ENCODE measurements at regions of chr3 and their contacts with region 1.

Region 1: GRCh38 chr3:139427283-139427993 is 38.0 kb upstream of the COPB2 start:
- DNase-seq: peak in 2 of 35 experiments; percentile 6 to 58
- ATAC-seq: no peak
- H3K4me3 ChIP-seq: no peak overlapping the region
- H3K4me3 Mint-ChIP-seq: no peak overlapping the region
- H3K27ac ChIP-seq: no peak overlapping the region
- H3K27ac Mint-ChIP-seq: no peak overlapping the region
- H3K4me1 ChIP-seq: no peaks in the 10 kb centered on the region
- H3K4me1 Mint-ChIP-seq: no peaks in the 10 kb centered on the region
- H3K27me3 ChIP-seq: no peaks in the 10 kb centered on the region
- H3K27me3 Mint-ChIP-seq: no peaks in the 10 kb centered on the region

Region 2: DNA sequence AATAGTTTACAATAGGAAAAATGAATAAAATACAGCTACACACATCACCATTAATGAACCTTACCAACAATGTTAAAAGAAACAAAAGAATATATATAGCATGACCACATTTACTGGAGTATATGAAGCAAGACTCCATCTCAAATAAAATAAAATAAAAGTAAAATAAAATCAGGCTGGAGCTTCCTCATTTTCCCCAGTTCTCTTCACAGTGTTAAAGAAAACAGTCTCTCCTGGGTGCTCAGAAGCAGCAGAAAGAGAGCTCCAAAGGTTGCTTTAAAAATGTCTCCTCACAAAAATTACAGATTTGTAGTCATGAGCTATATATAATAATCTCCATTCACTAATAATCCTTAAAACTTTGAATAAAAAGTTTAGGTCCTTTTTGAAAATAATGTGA is 641.5 kb before region 1 on chr3:
- CTCF ChIA-PET with region 1: interaction called in 1 of 2 experiments, 11 read pairs
- POLR2A ChIA-PET with region 1: no interaction called
- DNase-seq: no peak
- ATAC-seq: no peak
- H3K4me3 ChIP-seq: no peak overlapping the region
- H3K4me3 Mint-ChIP-seq: no peak overlapping the region
- H3K27ac ChIP-seq: no peak overlapping the region
- H3K27ac Mint-ChIP-seq: no peak overlapping the region
- H3K4me1 ChIP-seq: peaks cover 3 to 8% of the 10 kb centered on the region in 2 experiments
- H3K4me1 Mint-ChIP-seq: peaks cover 22 to 34% (median 31%) of the 10 kb centered on the region in 3 donors
- H3K27me3 ChIP-seq: no peaks in the 10 kb centered on the region
- H3K27me3 Mint-ChIP-seq: no peaks in the 10 kb centered on the region

Region 3: DNA sequence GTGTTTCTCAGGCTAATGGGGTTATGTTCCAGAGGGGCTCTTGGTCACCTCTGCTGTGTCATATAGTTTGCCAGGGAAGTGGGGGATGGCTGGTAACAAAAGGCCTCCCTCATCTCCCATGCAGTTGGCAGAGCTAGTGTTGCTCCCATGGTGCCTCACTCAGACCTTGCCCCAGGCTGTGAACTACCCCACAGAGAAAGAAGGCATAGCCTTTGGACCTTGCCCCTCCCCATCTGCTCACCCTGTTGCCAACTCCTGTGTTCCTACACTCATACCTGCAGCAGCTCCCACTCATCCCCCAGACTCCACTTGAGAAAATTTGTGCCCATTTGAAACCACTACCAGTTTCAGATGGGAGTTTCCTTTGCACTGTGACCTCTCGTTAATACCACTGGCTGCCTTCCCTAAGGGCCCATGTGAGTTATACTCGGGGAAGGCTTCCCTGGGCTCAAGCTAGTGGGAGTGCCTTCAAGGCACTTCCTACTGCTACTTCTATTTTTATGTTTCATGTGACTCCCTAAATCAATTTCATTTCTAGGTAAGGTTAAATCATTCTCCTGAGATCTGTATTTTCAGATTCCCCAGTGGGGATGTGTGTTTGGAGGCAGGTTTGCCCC is 12.7 kb before region 1 on chr3:
- CTCF ChIA-PET with region 1: no interaction called
- POLR2A ChIA-PET with region 1: no interaction called
- DNase-seq: no peak
- ATAC-seq: no peak
- H3K4me3 ChIP-seq: no peak overlapping the region
- H3K4me3 Mint-ChIP-seq: no peak overlapping the region
- H3K27ac ChIP-seq: no peak overlapping the region
- H3K27ac Mint-ChIP-seq: no peak overlapping the region
- H3K4me1 ChIP-seq: no peaks in the 10 kb centered on the region
- H3K4me1 Mint-ChIP-seq: no peaks in the 10 kb centered on the region
- H3K27me3 ChIP-seq: no peaks in the 10 kb centered on the region
- H3K27me3 Mint-ChIP-seq: no peaks in the 10 kb centered on the region

Region 4: GRCh38 chr3:139540651-139541151 is 113.3 kb after region 1 on chr3:
- CTCF ChIA-PET with region 1: no interaction called
- POLR2A ChIA-PET with region 1: no interaction called
- DNase-seq: no peak
- ATAC-seq: no peak
- H3K4me3 ChIP-seq: no peak overlapping the region
- H3K4me3 Mint-ChIP-seq: peak overlapping the region in 1 of 3 donors; percentile 54
- H3K27ac ChIP-seq: no peak overlapping the region
- H3K27ac Mint-ChIP-seq: no peak overlapping the region
- H3K4me1 ChIP-seq: peaks cover 0 to 6% of the 10 kb centered on the region in 2 experiments
- H3K4me1 Mint-ChIP-seq: peaks cover 0 to 11% (median 9%) of the 10 kb centered on the region in 3 donors
- H3K27me3 ChIP-seq: peaks cover 7 to 50% of the 10 kb centered on the region in 2 experiments
- H3K27me3 Mint-ChIP-seq: peaks cover 53 to 58% of the 10 kb centered on the region in 2 donors

Region 5: GRCh38 chr3:140863580-140864009 is 1436.2 kb after region 1 on chr3:
- CTCF ChIA-PET with region 1: interaction called, 10 to 12 read pairs
- POLR2A ChIA-PET with region 1: no interaction called
- DNase-seq: peak in 24 of 35 experiments; percentile 1 to 57 (median 10)
- ATAC-seq: no peak
- H3K4me3 ChIP-seq: no peak overlapping the region
- H3K4me3 Mint-ChIP-seq: no peak overlapping the region
- H3K27ac ChIP-seq: no peak overlapping the region
- H3K27ac Mint-ChIP-seq: no peak overlapping the region
- H3K4me1 ChIP-seq: peaks cover 0 to 3% of the 10 kb centered on the region in 2 experiments
- H3K4me1 Mint-ChIP-seq: no peaks in the 10 kb centered on the region
- H3K27me3 ChIP-seq: no peaks in the 10 kb centered on the region
- H3K27me3 Mint-ChIP-seq: peaks cover 5 to 7% of the 10 kb centered on the region in 2 donors

Measured in T-cell (primary cell).